Activated CD4-positive, alpha-beta memory T cell treated with anti-CD3 and anti-CD28 coated beads for 36 hours (primary cell): ENCODE measurements at regions of chr6 and their contacts with region 1.

Region 1: DNA sequence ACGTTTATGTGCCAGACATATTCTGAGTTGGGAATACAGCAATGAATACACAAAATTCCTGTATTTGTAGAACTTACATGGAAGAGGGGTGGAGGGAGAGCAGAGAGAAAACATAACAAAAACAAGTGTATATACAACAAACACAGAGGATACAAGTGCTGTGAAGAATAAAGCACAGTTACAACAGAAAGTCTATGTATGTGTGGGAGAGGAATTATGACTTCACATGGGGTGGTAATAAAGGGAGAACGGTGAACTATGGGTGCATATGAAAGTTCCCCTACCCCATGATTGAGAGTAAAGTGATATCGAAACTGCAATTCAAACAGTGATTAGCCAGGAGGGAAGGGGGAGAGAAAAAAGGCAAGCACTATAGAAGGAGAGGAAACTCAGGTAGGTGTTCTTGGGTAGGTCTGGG is 24.6 kb downstream of the HBS1L start:
- DNase-seq: no peak
- H3K4me3 Mint-ChIP-seq: peak overlapping the region; percentile 0
- H3K27ac Mint-ChIP-seq: peak overlapping the region; percentile 52
- H3K4me1 Mint-ChIP-seq: peaks cover 58% of the 10 kb centered on the region
- H3K27me3 Mint-ChIP-seq: no peaks in the 10 kb centered on the region

Region 2: GRCh38 chr6:135054569-135055498 is 24.8 kb after region 1 on chr6 and contains the start of gene HBS1L:
- CTCF ChIA-PET with region 1: no interaction called
- POLR2A ChIA-PET with region 1: interaction called, 4 read pairs
- intact Hi-C with region 1: loop called (anchors 1 kb)
- DNase-seq: peak; percentile 98
- H3K4me3 Mint-ChIP-seq: peak within 1 kb of the TSS; percentile 92
- H3K27ac Mint-ChIP-seq: peak within 1 kb of the TSS; percentile 96
- H3K4me1 Mint-ChIP-seq: peaks cover 34% of the 10 kb centered on the region
- H3K27me3 Mint-ChIP-seq: no peaks in the 10 kb centered on the region
- total RNA-seq, gene HBS1L: 117 to 123 TPM

Region 3: GRCh38 chr6:135162678-135163439 is 132.8 kb after region 1 on chr6:
- CTCF ChIA-PET with region 1: interaction called, 4 read pairs
- POLR2A ChIA-PET with region 1: no interaction called
- intact Hi-C with region 1: loop called (anchors 1 kb)
- DNase-seq: peak; percentile 54
- H3K4me3 Mint-ChIP-seq: peak overlapping the region; percentile 49
- H3K27ac Mint-ChIP-seq: peak overlapping the region; percentile 78
- H3K4me1 Mint-ChIP-seq: peaks cover 61% of the 10 kb centered on the region
- H3K27me3 Mint-ChIP-seq: peaks cover 3% of the 10 kb centered on the region